Activated naive CD4-positive, alpha-beta T cell treated with anti-CD3 and anti-CD28 coated beads for 36 hours (primary cell): ENCODE measurements at regions of chr2 and their contacts with region 1.

Region 1: GRCh38 chr2:234544659-234545611 is 48.1 kb upstream of the ARL4C start:
- DNase-seq: peak; percentile 85
- H3K4me3 Mint-ChIP-seq: no peak overlapping the region
- H3K27ac Mint-ChIP-seq: no peak overlapping the region
- H3K4me1 Mint-ChIP-seq: no peaks in the 10 kb centered on the region
- H3K27me3 Mint-ChIP-seq: peaks cover 4% of the 10 kb centered on the region

Region 2: GRCh38 chr2:234555720-234556119 is 10.8 kb after region 1 on chr2:
- CTCF ChIA-PET with region 1: interaction called, 10 read pairs
- intact Hi-C with region 1: no loop called
- DNase-seq: no peak
- H3K4me3 Mint-ChIP-seq: no peak overlapping the region
- H3K27ac Mint-ChIP-seq: no peak overlapping the region
- H3K4me1 Mint-ChIP-seq: no peaks in the 10 kb centered on the region
- H3K27me3 Mint-ChIP-seq: no peaks in the 10 kb centered on the region